K562 (cell line): ENCODE measurements at regions of chr7 and their contacts with region 1.

Region 1: GRCh38 chr7:157386979-157387800 is 50.4 kb downstream of the DNAJB6 start:
- DNase-seq: peak; percentile 78 to 92 (median 84)
- ATAC-seq: peak; percentile 97
- H3K4me3 ChIP-seq: no peak overlapping the region
- H3K27ac ChIP-seq: peak overlapping the region; percentile 57
- H3K4me1 ChIP-seq: peaks cover 3 to 4% of the 10 kb centered on the region in 2 experiments; a peak in 2 of 5 replicates
- H3K27me3 ChIP-seq: no peaks in the 10 kb centered on the region
- CTCF ChIP-seq: peak; percentile 89 to 99 (median 94)
- EP300 ChIP-seq: peak; percentile 39
- POLR2A ChIP-seq: peak; percentile 48
- RAD21 ChIP-seq: peak; percentile 13 to 72; a peak in 3 of 4 replicates

Region 2: DNA sequence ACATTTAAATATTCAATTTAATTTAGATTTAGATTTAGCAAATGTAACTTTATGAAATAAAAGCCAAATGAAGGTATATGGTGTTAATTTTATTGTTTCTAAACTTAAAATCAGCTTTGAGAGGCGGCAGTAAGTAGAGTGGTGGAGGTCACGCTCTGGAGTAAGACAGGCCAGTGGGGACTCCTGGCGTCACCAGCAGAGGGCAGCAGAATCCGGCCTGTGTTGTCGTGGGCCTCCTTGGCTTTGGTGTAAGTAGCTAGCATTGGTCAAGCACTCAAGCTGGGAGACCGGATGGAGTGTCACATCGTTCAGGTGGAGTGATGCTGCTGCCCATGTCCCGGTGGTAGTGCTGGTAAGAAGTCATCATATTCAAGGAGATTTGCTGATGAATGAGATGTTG is 149.1 kb before region 1 on chr7:
- CTCF ChIA-PET with region 1: no interaction called
- POLR2A ChIA-PET with region 1: no interaction called
- in situ Hi-C with region 1: no loop called
- intact Hi-C with region 1: loop called (anchors 5 kb)
- DNase-seq: peak; percentile 68 to 76 (median 69)
- ATAC-seq: peak; percentile 94
- H3K4me3 ChIP-seq: no peak overlapping the region
- H3K27ac ChIP-seq: no peak overlapping the region
- H3K4me1 ChIP-seq: no peaks in the 10 kb centered on the region
- H3K27me3 ChIP-seq: no peaks in the 10 kb centered on the region
- CTCF ChIP-seq: peak; percentile 76 to 93 (median 81)
- EP300 ChIP-seq: no peak
- POLR2A ChIP-seq: no peak
- RAD21 ChIP-seq: peak; percentile 23 to 53; a peak in 3 of 4 replicates

Region 3: DNA sequence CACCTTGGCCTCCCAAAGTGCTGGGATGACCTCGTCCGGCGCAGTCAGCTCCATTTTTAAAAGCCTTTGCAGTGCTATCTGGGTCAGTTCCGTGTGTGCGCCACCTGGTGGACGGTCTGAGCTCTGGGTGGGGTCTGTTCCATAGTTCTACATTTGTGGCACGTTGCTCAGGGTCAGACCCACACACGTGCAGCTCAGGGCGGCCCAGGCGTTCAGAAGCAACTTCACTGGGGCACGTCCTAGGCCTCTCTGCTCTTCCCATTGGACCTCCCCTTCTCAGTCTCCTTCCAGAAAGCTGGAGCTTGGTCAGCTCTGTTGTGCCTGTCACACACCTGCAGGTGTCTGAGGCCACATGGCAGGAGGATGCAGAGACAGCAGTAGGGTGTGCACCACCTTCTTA is 87.5 kb after region 1 on chr7:
- CTCF ChIA-PET with region 1: no interaction called
- POLR2A ChIA-PET with region 1: no interaction called
- in situ Hi-C with region 1: no loop called
- intact Hi-C with region 1: no loop called
- DNase-seq: peak; percentile 79 to 85 (median 82)
- ATAC-seq: peak; percentile 95
- H3K4me3 ChIP-seq: no peak overlapping the region
- H3K27ac ChIP-seq: no peak overlapping the region
- H3K4me1 ChIP-seq: peaks cover 0 to 17% of the 10 kb centered on the region in 2 experiments; a peak in 2 of 5 replicates
- H3K27me3 ChIP-seq: peaks cover 25 to 46% of the 10 kb centered on the region in 2 experiments
- CTCF ChIP-seq: peak; percentile 69 to 84 (median 79)
- EP300 ChIP-seq: no peak
- POLR2A ChIP-seq: no peak
- RAD21 ChIP-seq: peak; percentile 17 to 62; a peak in 2 of 4 replicates